ENCODE measurements at regions of chr17 and their contacts with region 1.

Region 1: DNA sequence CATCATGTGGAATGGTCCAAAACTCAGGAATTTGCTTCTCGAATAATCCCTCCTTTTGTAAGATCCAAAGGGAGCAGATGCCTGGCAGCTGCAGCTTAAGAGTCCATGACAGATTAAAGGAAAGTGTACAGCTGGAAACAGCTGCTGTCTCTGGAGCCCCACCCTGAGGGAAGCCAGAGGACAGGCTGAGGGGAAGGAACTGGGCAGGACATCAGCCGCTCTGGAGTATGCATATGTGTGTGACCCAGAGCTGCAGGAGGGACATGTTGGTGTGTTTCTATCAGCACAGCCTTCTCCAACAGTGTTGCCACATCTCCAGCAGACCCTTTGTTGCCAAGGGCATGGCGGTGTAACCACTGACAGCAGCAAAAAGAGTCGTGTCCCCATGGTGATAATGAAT is 46.2 kb downstream of the CYB561 start:
- DNase-seq: no peak
- CTCF ChIP-seq: no peak

Region 2: GRCh38 chr17:63096426-63096825 is 303.4 kb before region 1 on chr17:
- in situ Hi-C with region 1: loop called (anchors 10 kb)
- DNase-seq: no peak
- CTCF ChIP-seq: no peak

Region 3: DNA sequence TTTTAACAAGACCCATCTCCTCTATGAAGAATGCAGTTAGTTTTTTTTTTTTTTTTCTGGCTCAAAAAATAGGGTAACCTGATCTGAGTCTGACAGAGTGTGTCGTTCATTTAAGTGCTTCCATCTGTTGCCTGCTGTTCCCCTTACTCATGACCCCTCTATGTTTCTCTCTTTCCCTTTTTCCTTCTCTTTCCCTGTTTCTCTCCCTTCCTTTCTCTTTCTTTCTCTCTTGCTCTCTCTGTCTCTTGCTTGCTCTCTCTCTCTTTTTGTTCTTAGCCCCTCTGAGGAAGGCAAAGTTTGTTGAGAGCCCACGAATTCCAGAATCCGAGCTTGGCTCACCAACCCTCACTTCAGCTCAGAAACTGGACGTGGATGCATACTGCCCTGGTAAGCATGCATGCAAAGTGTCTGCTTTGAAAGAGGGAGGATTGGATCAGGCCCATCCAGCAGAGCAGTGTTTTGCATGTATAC is 248.8 kb before region 1 on chr17:
- in situ Hi-C with region 1: no loop called
- DNase-seq: no peak
- CTCF ChIP-seq: no peak

Region 4: GRCh38 chr17:63232565-63233310 is 167.1 kb before region 1 on chr17:
- in situ Hi-C with region 1: no loop called
- DNase-seq: no peak
- CTCF ChIP-seq: no peak

Region 5: GRCh38 chr17:63349478-63350000 is 50.3 kb before region 1 on chr17:
- in situ Hi-C with region 1: no loop called
- DNase-seq: no peak
- CTCF ChIP-seq: no peak